ENCODE measurements at regions of chr19 and their contacts with region 1.

Region 1: GRCh38 chr19:49869441-49870176 is 2.2 kb upstream of the PNKP start:
- DNase-seq: peak; percentile 94 to 98 (median 98)
- ATAC-seq: peak; percentile 84 to 86
- H3K4me3 ChIP-seq: peak overlapping the region; percentile 32
- H3K27ac ChIP-seq: peak overlapping the region; percentile 86
- H3K4me1 ChIP-seq: peaks cover 4% of the 10 kb centered on the region
- H3K27me3 ChIP-seq: no peaks in the 10 kb centered on the region

Region 2: GRCh38 chr19:49817964-49818648 is 51.5 kb before region 1 on chr19 and contains the start of gene MED25:
- intact Hi-C with region 1: loop called in 3 of 4 experiments (anchors 5 to 10 kb)
- DNase-seq: peak; percentile 88 to 96 (median 95)
- ATAC-seq: peak; percentile 84 to 85
- H3K4me3 ChIP-seq: peak within 1 kb of the TSS; percentile 65
- H3K27ac ChIP-seq: peak within 1 kb of the TSS; percentile 98
- H3K4me1 ChIP-seq: peaks cover 3% of the 10 kb centered on the region
- H3K27me3 ChIP-seq: no peaks in the 10 kb centered on the region
- total RNA-seq, gene MED25: 37.8 to 50.4 (median 43.1) TPM